Heart left ventricle (tissue), 16 donors: ENCODE measurements at regions of chr7 and their contacts with region 1.

Region 1: DNA sequence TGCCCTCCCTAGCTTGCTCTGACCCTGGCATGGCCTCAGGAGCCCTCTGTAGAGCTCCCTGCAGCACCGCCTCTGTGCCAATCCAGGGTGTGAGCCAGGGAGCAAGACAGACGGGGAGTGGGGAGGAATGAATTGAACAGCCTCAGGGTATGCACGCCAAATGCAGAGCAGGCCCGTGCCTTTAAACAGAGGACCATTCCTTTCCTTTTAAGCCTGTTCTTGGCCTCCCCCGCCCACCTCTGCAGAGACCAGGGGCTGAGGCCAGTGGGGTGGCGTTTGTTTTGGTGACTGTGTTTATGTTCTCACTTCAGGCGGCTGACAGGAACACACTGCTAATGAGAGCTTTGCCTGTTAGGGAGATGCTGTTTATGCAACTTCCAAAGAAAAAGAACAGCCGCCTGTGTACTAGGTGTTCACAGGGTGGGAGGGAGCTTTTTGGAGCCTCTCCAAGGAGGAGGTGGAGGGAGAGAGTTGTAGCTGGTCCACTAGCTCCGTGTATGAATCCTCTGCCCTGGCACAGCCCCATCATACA is 528.1 kb upstream of the DPP6 start:
- DNase-seq: peak in 1 of 5 donors; percentile 60
- ATAC-seq: peak; percentile 84 to 89 (median 87)
- H3K4me3 ChIP-seq: no peak overlapping the region
- H3K27ac ChIP-seq: peak overlapping the region in 5 of 12 donors; percentile 20 to 79 (median 39)
- H3K4me1 ChIP-seq: no peaks in the 10 kb centered on the region
- H3K27me3 ChIP-seq: no peaks in the 10 kb centered on the region
- CTCF ChIP-seq: no peak
- POLR2A ChIP-seq: no peak

Region 2: GRCh38 chr7:153217032-153217431 is 307.1 kb before region 1 on chr7:
- intact Hi-C with region 1: no loop called
- DNase-seq: no peak
- ATAC-seq: no peak
- H3K4me3 ChIP-seq: no peak overlapping the region
- H3K27ac ChIP-seq: no peak overlapping the region
- H3K4me1 ChIP-seq: no peaks in the 10 kb centered on the region
- H3K27me3 ChIP-seq: peaks cover 0 to 3% (median 0%) of the 10 kb centered on the region in 9 donors
- CTCF ChIP-seq: no peak
- POLR2A ChIP-seq: no peak

Region 3: DNA sequence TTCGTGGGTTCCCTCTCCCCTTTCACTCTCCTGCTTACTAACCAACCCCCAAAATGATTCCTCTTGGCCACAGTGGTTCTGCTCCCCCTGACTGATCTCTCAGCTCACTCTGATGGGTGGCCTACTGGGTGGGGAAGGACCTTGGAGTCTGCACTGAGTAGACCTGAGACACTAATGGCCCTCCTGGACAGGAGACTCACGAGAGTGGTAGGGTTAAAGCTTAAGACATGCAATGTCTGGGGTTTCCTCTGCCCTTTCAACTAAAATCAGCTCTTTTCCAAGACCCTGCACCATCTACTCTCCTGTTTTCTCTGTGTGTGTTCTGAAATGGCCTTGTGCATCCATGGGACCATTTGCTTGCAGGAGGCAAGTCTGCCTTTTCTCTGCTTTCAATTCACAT is 133.2 kb before region 1 on chr7:
- intact Hi-C with region 1: loop called in 1 of 10 experiments (anchors 2 kb)
- DNase-seq: no peak
- ATAC-seq: no peak
- H3K4me3 ChIP-seq: no peak overlapping the region
- H3K27ac ChIP-seq: no peak overlapping the region
- H3K4me1 ChIP-seq: no peaks in the 10 kb centered on the region
- H3K27me3 ChIP-seq: no peaks in the 10 kb centered on the region
- CTCF ChIP-seq: no peak
- POLR2A ChIP-seq: no peak

Region 4: GRCh38 chr7:153473185-153473584 is 51.0 kb before region 1 on chr7:
- intact Hi-C with region 1: loop called in 1 of 10 experiments (anchors 5 kb)
- DNase-seq: peak in 1 of 5 donors; percentile 36
- ATAC-seq: peak in 3 of 4 donors; percentile 47 to 60 (median 55)
- H3K4me3 ChIP-seq: no peak overlapping the region
- H3K27ac ChIP-seq: peak overlapping the region in 1 of 12 donors; percentile 22
- H3K4me1 ChIP-seq: peaks cover 0 to 4% (median 0%) of the 10 kb centered on the region in 12 donors
- H3K27me3 ChIP-seq: peaks cover 0 to 5% (median 0%) of the 10 kb centered on the region in 9 donors
- CTCF ChIP-seq: no peak
- POLR2A ChIP-seq: no peak

Region 5: GRCh38 chr7:153507885-153508284 is 16.3 kb before region 1 on chr7:
- intact Hi-C with region 1: no loop called
- DNase-seq: no peak
- ATAC-seq: no peak
- H3K4me3 ChIP-seq: no peak overlapping the region
- H3K27ac ChIP-seq: no peak overlapping the region
- H3K4me1 ChIP-seq: no peaks in the 10 kb centered on the region
- H3K27me3 ChIP-seq: no peaks in the 10 kb centered on the region
- CTCF ChIP-seq: no peak
- POLR2A ChIP-seq: no peak